HEK293 (cell line): ENCODE measurements at regions of chr5 and their contacts with region 1.

Region 1: GRCh38 chr5:173331956-173332479 is 3.8 kb upstream of the STC2 start:
- H3K4me3 ChIP-seq: no peak overlapping the region
- H3K27ac ChIP-seq: no peak overlapping the region
- H3K4me1 ChIP-seq: no peaks in the 10 kb centered on the region
- CTCF ChIP-seq: peak; percentile 93

Region 2: DNA sequence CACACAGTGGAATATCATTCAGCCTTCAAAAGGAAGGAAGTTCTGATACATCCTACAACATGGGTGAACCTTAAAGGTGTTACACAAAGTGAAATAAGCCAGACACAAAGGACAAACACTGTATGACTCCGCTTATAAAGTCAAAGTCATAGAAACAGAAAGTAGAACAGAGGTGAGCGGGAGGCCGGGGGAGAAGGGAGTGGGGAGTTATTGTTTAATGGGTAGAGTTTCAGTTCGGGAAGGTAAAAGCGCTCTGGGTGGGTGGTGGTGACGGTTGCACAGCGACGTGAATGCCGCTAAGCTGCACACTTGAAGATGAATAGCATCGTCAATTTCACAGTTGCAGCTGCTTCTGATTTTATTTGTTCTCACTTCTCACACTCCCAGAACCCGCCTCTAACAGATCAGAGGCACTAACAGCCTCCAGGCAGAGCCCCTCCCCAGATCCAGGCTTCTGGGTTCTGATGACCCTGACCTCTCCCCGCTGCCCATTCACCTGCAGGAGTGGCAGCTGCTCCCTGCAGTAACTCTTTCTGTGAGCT is 153.6 kb before region 1 on chr5:
- CTCF ChIA-PET with region 1: no interaction called
- POLR2A ChIA-PET with region 1: no interaction called
- H3K4me3 ChIP-seq: no peak overlapping the region
- H3K27ac ChIP-seq: no peak overlapping the region
- H3K4me1 ChIP-seq: no peaks in the 10 kb centered on the region
- CTCF ChIP-seq: no peak

Region 3: GRCh38 chr5:173283318-173284288 is 48.4 kb before region 1 on chr5:
- CTCF ChIA-PET with region 1: interaction called, 11 read pairs
- POLR2A ChIA-PET with region 1: interaction called, 3 read pairs
- H3K4me3 ChIP-seq: no peak overlapping the region; the same call in 1 of the 2 replicates
- H3K27ac ChIP-seq: no peak overlapping the region
- H3K4me1 ChIP-seq: no peaks in the 10 kb centered on the region
- CTCF ChIP-seq: peak; percentile 94

Region 4: GRCh38 chr5:173293817-173294672 is 38.0 kb before region 1 on chr5:
- CTCF ChIA-PET with region 1: interaction called, 212 read pairs
- POLR2A ChIA-PET with region 1: interaction called, 60 read pairs
- H3K4me3 ChIP-seq: no peak overlapping the region
- H3K27ac ChIP-seq: no peak overlapping the region
- H3K4me1 ChIP-seq: peaks cover 4% of the 10 kb centered on the region; the same call in 1 of the 2 replicates
- CTCF ChIP-seq: peak; percentile 94

Region 5: GRCh38 chr5:173302547-173303066 is 29.4 kb before region 1 on chr5:
- CTCF ChIA-PET with region 1: interaction called, 212 read pairs
- POLR2A ChIA-PET with region 1: interaction called, 60 read pairs
- H3K4me3 ChIP-seq: no peak overlapping the region
- H3K27ac ChIP-seq: no peak overlapping the region
- H3K4me1 ChIP-seq: peaks cover 13% of the 10 kb centered on the region
- CTCF ChIP-seq: no peak

Region 6: GRCh38 chr5:173315495-173316350 is 16.3 kb before region 1 on chr5:
- CTCF ChIA-PET with region 1: interaction called, 17 read pairs
- POLR2A ChIA-PET with region 1: interaction called, 134 read pairs
- H3K4me3 ChIP-seq: no peak overlapping the region
- H3K27ac ChIP-seq: peak overlapping the region; percentile 74
- H3K4me1 ChIP-seq: peaks cover 20% of the 10 kb centered on the region
- CTCF ChIP-seq: no peak